PC-3 (cell line): ENCODE measurements at regions of chr4 and their contacts with region 1.

Region 1: GRCh38 chr4:106010761-106011160 is 115.5 kb downstream of the NPNT start:
- DNase-seq: no peak
- ATAC-seq: no peak
- H3K4me3 ChIP-seq: no peak overlapping the region
- H3K27ac ChIP-seq: no peak overlapping the region
- H3K4me1 ChIP-seq: no peaks in the 10 kb centered on the region
- H3K27me3 ChIP-seq: no peaks in the 10 kb centered on the region
- CTCF ChIP-seq: no peak

Region 2: DNA sequence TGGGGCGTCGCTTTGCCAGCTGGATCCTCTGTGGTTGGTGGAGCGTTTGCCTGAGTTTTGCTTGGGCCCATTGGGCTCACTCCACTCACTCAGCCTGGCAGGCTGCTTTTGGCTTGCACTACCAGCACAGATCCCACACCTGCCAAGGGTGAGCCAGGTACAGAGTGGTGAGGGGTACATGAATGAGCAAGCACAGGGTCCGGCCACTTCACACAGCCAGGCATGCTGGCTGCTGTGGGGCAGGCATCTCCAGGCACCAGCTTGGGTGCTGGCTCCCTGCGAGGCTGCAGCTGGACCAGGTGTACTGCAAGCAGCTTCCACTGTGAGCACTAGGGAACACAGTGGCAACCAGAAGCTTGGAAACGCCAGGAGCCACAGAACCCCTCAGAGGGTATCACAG is 175.6 kb before region 1 on chr4:
- CTCF ChIA-PET with region 1: no interaction called
- POLR2A ChIA-PET with region 1: interaction called, 17 read pairs
- intact Hi-C with region 1: no loop called
- DNase-seq: no peak
- ATAC-seq: no peak
- H3K4me3 ChIP-seq: no peak overlapping the region
- H3K27ac ChIP-seq: no peak overlapping the region
- H3K4me1 ChIP-seq: no peaks in the 10 kb centered on the region
- H3K27me3 ChIP-seq: no peaks in the 10 kb centered on the region
- CTCF ChIP-seq: no peak